Left cardiac atrium (tissue), 4 donors: ENCODE measurements at regions of chr12 and their contacts with region 1.

Region 1: GRCh38 chr12:109713187-109713984 is at the start of gene FAM222A:
- DNase-seq: peak; percentile 98
- ATAC-seq: peak; percentile 95 to 96
- total RNA-seq, gene FAM222A: 14.5 to 21.8 TPM

Region 2: GRCh38 chr12:109518820-109519665 is 194.3 kb before region 1 on chr12:
- intact Hi-C with region 1: loop called in 1 of 2 experiments (anchors 10 kb)
- DNase-seq: peak; percentile 69
- ATAC-seq: peak; percentile 50 to 60

Region 3: GRCh38 chr12:109573029-109573913 is 140.1 kb before region 1 on chr12 and contains the starts of genes MMAB and MVK:
- intact Hi-C with region 1: no loop called
- DNase-seq: peak; percentile 99
- ATAC-seq: peak; percentile 99
- total RNA-seq, gene MMAB: 47.0 to 53.4 TPM
- total RNA-seq, gene MVK: 11.2 to 12.6 TPM

Region 4: DNA sequence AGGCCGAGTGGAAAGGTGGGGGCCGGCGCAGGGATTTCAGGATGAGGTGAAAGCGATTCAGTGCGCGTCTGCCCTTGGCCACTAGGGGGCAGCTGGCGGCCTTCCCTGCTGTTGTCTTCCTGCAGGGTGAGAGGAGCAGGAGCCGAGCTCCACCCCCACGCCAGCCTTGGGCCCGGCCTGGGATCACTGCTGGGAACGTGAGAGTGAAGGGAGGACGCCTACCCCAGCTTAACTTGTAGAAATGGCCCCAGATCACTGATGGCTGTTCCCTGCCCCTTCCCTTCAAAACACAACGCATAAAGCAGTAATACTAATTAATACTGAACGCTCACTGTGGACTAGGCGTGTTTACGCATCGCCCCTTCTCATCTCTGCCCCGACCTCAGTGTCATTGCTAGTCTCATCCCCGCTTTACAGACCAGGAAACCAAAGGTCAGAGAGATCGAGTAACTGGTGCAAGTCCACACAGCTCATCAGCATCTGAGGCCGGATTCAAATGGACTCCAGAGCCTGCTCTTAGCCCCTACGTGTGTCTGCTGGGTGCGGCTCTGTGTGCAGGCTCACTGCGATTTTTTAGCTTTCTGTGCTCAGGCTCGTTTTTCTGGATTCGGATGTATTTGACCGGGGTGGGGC is 115.5 kb before region 1 on chr12:
- intact Hi-C with region 1: loop called (anchors 2 to 10 kb)
- DNase-seq: peak; percentile 90
- ATAC-seq: peak; percentile 94 to 95

Region 5: GRCh38 chr12:109606320-109607028 is 106.9 kb before region 1 on chr12:
- intact Hi-C with region 1: loop called in 1 of 2 experiments (anchors 10 kb)
- DNase-seq: peak; percentile 44
- ATAC-seq: peak; percentile 80 to 81